Activated CD4-positive, alpha-beta memory T cell treated with anti-CD3 and anti-CD28 coated beads for 36 hours (primary cell): ENCODE measurements at regions of chr15 and their contacts with region 1.

Region 1: DNA sequence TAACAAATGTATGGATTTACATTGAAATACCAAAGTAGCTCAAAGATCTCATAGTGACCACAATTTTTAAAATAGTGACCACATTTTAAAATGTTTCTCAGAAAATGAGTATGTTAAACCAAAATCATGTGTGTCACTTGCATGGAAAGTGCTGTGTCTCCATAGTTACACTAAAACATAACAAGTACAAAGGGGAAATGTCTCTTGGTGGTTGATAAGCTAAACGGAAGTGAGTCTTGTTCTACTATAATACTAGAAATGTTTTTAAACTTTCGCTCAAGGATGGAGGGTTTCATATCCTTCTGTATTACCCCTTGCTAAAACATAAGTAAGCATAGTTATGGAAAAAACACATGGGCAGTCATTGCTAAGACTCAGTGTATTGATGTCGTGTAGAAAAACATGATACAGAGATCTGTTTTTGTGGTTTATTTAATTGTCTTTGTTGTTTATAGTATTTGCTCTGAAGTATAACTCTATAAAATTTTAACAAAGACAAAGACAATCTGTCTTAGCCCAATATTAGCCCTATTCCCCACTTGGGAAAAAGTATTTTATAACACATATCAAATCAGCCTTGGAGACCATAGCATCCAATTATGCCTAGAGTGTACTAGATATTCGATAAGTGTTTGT is 27.0 kb upstream of the DENND4A start:
- DNase-seq: no peak
- H3K4me3 Mint-ChIP-seq: peak overlapping the region; percentile 36
- H3K27ac Mint-ChIP-seq: peak overlapping the region; percentile 66
- H3K4me1 Mint-ChIP-seq: peaks cover 50% of the 10 kb centered on the region
- H3K27me3 Mint-ChIP-seq: no peaks in the 10 kb centered on the region

Region 2: DNA sequence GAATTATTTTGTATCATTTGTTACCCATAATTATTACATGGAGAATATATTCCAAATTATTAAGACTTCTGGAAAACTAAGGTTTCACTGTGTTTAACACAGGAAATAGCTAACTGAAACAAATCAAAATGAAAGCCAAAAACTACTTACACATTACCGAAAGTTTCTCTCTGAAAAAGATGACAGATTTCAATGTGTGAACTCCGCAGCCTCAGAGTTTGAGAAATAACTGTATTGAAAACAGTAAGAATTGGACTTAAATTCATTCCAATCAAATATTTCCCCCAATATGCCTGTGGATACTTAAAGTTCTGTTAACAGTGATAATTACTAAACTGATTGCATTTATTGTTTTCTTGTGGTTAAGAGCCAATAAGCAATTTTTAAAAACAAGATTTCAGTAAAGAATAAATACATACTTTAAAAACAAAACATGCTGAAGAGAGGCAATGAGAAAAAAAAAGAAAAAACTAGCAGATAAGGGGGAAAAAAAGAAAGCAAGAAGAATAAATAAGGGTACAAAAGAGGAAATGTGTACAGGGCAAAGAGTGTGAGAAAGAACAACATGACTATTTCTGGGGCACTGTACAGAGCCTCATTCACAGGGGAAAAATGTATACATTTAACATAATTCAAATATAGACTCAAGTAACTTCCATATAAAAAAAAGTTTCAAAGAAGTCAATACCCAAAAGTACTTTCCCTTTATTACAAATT is 57.7 kb before region 1 on chr15:
- CTCF ChIA-PET with region 1: interaction called, 4 read pairs
- POLR2A ChIA-PET with region 1: interaction called, 4 read pairs
- intact Hi-C with region 1: loop called (anchors 1 kb)
- DNase-seq: no peak
- H3K4me3 Mint-ChIP-seq: no peak overlapping the region
- H3K27ac Mint-ChIP-seq: peak overlapping the region; percentile 5
- H3K4me1 Mint-ChIP-seq: peaks cover 40% of the 10 kb centered on the region
- H3K27me3 Mint-ChIP-seq: no peaks in the 10 kb centered on the region

Region 3: DNA sequence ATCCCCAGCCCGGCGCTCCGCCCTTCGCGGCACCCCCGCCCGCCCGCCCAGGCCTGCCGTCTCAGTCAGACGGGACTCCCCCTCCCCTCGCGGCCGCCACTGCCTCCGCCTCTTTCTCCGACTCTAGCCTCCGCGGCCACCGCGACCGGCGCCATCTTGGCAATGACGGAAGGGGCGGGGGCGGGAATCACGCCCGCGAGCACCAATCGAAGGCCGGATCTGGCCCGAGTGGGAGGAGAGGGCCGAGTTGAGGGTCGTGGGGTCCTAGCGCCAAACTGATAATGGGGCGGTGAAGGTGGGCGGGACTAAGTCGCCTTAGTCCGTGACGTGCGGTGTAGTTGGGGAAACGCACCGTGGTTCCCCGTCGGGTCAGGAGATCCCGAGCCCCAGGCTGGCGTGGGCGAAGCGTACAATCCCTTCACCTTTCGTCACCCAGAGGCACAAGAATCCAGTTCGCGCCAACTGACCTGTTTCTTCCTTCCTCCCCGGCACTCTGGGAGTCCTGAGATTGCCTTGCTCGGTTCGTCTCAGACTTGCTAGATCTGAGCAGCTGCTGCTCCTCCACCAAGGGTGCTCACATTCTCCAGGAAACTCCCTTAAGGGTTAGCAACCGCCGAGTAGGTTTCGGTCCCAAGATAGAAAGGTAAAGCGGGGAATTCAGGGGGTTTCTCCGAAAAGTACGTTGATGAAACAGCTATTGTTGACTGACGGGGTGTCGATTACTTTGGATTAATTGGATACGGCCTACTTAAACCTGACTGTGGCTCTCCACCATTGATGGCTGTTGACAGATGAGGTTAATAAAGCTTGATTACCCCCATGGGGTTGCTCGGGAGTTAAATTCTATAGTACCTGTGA is 26.7 kb before region 1 on chr15 and contains the start of gene DENND4A:
- CTCF ChIA-PET with region 1: interaction called, 8 read pairs
- POLR2A ChIA-PET with region 1: interaction called, 44 read pairs
- intact Hi-C with region 1: loop called (anchors 1 kb)
- DNase-seq: peak; percentile 99
- H3K4me3 Mint-ChIP-seq: peak within 1 kb of the TSS; percentile 82
- H3K27ac Mint-ChIP-seq: peak within 1 kb of the TSS; percentile 97
- H3K4me1 Mint-ChIP-seq: peaks cover 60% of the 10 kb centered on the region
- H3K27me3 Mint-ChIP-seq: no peaks in the 10 kb centered on the region
- total RNA-seq, gene DENND4A: 39.9 to 41.3 TPM

Region 4: GRCh38 chr15:65804252-65804931 is 14.7 kb before region 1 on chr15:
- CTCF ChIA-PET with region 1: interaction called, 5 read pairs
- POLR2A ChIA-PET with region 1: interaction called, 8 read pairs
- intact Hi-C with region 1: loop called (anchors 1 kb)
- DNase-seq: no peak
- H3K4me3 Mint-ChIP-seq: no peak overlapping the region
- H3K27ac Mint-ChIP-seq: peak overlapping the region; percentile 31
- H3K4me1 Mint-ChIP-seq: peaks cover 35% of the 10 kb centered on the region
- H3K27me3 Mint-ChIP-seq: no peaks in the 10 kb centered on the region

Region 5: GRCh38 chr15:65832549-65833364 is 13.7 kb after region 1 on chr15:
- CTCF ChIA-PET with region 1: interaction called, 10 read pairs
- POLR2A ChIA-PET with region 1: interaction called, 8 read pairs
- intact Hi-C with region 1: loop called (anchors 1 kb)
- DNase-seq: peak; percentile 72
- H3K4me3 Mint-ChIP-seq: peak overlapping the region; percentile 68
- H3K27ac Mint-ChIP-seq: peak overlapping the region; percentile 94
- H3K4me1 Mint-ChIP-seq: peaks cover 45% of the 10 kb centered on the region
- H3K27me3 Mint-ChIP-seq: no peaks in the 10 kb centered on the region

Region 6: GRCh38 chr15:65887565-65887964 is 68.5 kb after region 1 on chr15:
- CTCF ChIA-PET with region 1: no interaction called
- POLR2A ChIA-PET with region 1: no interaction called
- intact Hi-C with region 1: loop called (anchors 1 kb)
- DNase-seq: peak; percentile 58
- H3K4me3 Mint-ChIP-seq: no peak overlapping the region
- H3K27ac Mint-ChIP-seq: peak overlapping the region; percentile 66
- H3K4me1 Mint-ChIP-seq: peaks cover 78% of the 10 kb centered on the region
- H3K27me3 Mint-ChIP-seq: no peaks in the 10 kb centered on the region